Activated T-helper 2 cell treated with anti-CD3 and anti-CD28 coated beads, Interferon-gamma antibody, Interleukin-2, Interleukin-4, amounts not matched to agents 10 μg/mL and 5 μg/mL and 100 μg/mL, durations not matched to agents 14 hours and 24 hours and 36 hours (primary cell): ENCODE measurements at regions of chr2 and their contacts with region 1.

Region 1: DNA sequence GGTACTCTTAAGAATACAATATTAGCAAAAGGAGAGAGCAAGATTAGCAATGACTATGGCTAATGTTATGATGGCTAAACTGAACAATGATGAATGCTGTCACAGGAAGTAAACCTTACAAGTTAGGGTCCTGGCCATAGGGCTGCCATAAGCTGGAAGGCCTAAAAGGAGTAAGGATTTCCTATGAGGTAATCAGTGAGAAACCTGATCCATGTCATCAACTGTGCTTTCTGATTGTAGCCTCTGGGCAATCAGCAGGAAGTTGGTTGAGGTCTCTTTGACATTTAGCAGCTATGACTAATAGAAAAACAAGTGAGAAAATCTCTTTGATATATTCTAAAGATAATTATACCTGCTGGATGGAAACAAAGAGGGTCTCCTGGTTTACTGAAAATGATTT is 193.0 kb downstream of the RAB3GAP1 start:
- DNase-seq: peak; percentile 16
- H3K4me3 Mint-ChIP-seq: no peak overlapping the region
- H3K27ac Mint-ChIP-seq: peak overlapping the region; percentile 82
- H3K4me1 Mint-ChIP-seq: peaks cover 24% of the 10 kb centered on the region
- H3K27me3 Mint-ChIP-seq: no peaks in the 10 kb centered on the region

Region 2: GRCh38 chr2:135311268-135311667 is 66.2 kb after region 1 on chr2:
- intact Hi-C with region 1: loop called (anchors 5 kb)
- DNase-seq: no peak
- H3K4me3 Mint-ChIP-seq: no peak overlapping the region
- H3K27ac Mint-ChIP-seq: peak overlapping the region; percentile 71
- H3K4me1 Mint-ChIP-seq: peaks cover 10% of the 10 kb centered on the region
- H3K27me3 Mint-ChIP-seq: no peaks in the 10 kb centered on the region

Region 3: DNA sequence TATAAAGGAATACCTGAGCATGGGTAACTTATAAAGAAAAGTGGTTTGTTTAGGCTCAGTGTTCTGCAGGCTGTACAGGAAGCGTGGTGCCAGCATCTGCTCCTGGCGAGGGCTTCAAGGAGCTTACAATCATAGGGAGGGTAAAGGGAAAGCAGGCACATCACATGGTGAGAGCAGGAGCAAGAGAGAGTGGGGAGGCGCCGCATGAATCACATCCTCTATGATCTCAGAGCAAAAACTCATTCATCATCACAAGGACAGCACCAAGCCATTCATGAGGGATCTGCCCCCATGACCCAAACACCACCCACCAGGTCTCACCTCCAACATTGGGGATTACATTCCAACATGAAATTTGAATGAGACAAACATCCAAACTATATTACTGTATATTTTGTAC is 318.7 kb after region 1 on chr2:
- intact Hi-C with region 1: no loop called
- DNase-seq: no peak
- H3K4me3 Mint-ChIP-seq: no peak overlapping the region
- H3K27ac Mint-ChIP-seq: no peak overlapping the region
- H3K4me1 Mint-ChIP-seq: peaks cover 5% of the 10 kb centered on the region
- H3K27me3 Mint-ChIP-seq: no peaks in the 10 kb centered on the region